Endothelial cell of umbilical vein (primary cell): ENCODE measurements at regions of chr18 and their contacts with region 1.

Region 1: DNA sequence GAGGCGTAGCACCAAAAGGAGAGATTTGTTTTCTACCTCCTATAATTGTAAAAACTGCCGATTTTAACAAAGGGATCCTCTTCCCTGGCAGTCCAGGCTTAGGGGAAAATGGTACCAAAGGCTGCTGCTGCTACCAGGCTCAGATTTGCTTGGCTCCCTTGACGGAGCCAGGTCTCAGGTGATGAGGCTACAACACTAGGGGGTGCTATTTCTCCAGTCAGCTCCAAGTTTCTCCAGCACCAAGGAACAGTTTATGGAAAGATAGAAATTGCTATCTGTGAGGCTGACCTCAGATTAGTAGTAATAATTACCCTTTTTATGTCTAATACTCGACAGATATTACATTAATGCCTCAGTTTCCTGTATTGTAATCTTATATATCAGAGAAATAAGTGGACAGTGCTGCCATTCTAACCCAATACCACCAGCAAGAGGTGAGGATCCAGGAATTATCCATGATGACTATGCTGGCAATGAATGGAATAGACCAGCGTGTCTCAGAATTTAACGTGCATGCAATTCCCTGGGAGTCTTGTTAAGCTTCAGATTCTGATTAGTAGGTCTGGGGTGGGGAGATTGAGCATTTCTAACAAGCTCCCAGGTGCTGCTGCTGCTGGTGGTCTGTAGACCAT is 111.3 kb downstream of the ESCO1 start:
- DNase-seq: peak; percentile 58
- H3K4me3 ChIP-seq: no peak overlapping the region
- H3K27ac ChIP-seq: no peak overlapping the region
- H3K4me1 ChIP-seq: peaks cover 10% of the 10 kb centered on the region
- H3K27me3 ChIP-seq: no peaks in the 10 kb centered on the region
- CTCF ChIP-seq: peak; percentile 75 to 76
- POLR2A ChIP-seq: no peak

Region 2: DNA sequence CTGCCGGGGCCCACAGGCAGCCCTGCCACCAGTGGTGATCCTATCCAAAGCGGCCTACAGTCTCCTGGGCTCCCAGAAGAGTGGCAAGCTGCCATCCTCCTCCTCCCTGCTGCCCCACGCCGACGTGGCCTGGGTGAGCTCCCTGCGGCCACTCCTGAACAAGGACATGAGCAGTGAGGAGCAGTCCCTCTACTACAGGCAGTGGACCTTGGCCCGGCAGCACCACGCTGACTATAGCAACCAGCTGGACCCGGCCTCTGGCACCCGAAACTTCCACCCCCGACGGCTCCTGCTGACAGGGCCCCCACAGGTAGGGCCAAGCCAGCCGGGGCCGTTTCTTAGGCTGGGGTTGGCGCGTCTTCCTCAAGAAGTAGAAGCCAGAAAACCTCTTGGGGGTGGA is 10.8 kb after region 1 on chr18:
- CTCF ChIA-PET with region 1: interaction called, 19 read pairs
- POLR2A ChIA-PET with region 1: no interaction called
- dilution Hi-C with region 1: no loop called
- intact Hi-C with region 1: no loop called
- DNase-seq: no peak
- H3K4me3 ChIP-seq: no peak overlapping the region
- H3K27ac ChIP-seq: no peak overlapping the region
- H3K4me1 ChIP-seq: no peaks in the 10 kb centered on the region
- H3K27me3 ChIP-seq: no peaks in the 10 kb centered on the region
- CTCF ChIP-seq: no peak
- POLR2A ChIP-seq: no peak

Region 3: GRCh38 chr18:21509062-21509461 is 19.8 kb after region 1 on chr18:
- CTCF ChIA-PET with region 1: interaction called, 20 read pairs
- POLR2A ChIA-PET with region 1: no interaction called
- dilution Hi-C with region 1: no loop called
- intact Hi-C with region 1: no loop called
- DNase-seq: no peak
- H3K4me3 ChIP-seq: no peak overlapping the region
- H3K27ac ChIP-seq: no peak overlapping the region
- H3K4me1 ChIP-seq: no peaks in the 10 kb centered on the region
- H3K27me3 ChIP-seq: no peaks in the 10 kb centered on the region
- CTCF ChIP-seq: no peak
- POLR2A ChIP-seq: no peak

Region 4: GRCh38 chr18:21600526-21601410 is 111.5 kb after region 1 on chr18 and contains the start of gene ESCO1:
- CTCF ChIA-PET with region 1: interaction called, 63 read pairs
- POLR2A ChIA-PET with region 1: no interaction called
- dilution Hi-C with region 1: no loop called
- intact Hi-C with region 1: loop called (anchors 1 kb)
- DNase-seq: peak; percentile 98
- H3K4me3 ChIP-seq: peak within 1 kb of the TSS; percentile 47 to 89 (median 68)
- H3K27ac ChIP-seq: peak within 1 kb of the TSS; percentile 59
- H3K4me1 ChIP-seq: no peaks in the 10 kb centered on the region
- H3K27me3 ChIP-seq: no peaks in the 10 kb centered on the region
- CTCF ChIP-seq: peak; percentile 97 to 99
- POLR2A ChIP-seq: peak; percentile 83
- total RNA-seq, gene ESCO1: 9.1 and 12.0 TPM in 2 replicates

Region 5: DNA sequence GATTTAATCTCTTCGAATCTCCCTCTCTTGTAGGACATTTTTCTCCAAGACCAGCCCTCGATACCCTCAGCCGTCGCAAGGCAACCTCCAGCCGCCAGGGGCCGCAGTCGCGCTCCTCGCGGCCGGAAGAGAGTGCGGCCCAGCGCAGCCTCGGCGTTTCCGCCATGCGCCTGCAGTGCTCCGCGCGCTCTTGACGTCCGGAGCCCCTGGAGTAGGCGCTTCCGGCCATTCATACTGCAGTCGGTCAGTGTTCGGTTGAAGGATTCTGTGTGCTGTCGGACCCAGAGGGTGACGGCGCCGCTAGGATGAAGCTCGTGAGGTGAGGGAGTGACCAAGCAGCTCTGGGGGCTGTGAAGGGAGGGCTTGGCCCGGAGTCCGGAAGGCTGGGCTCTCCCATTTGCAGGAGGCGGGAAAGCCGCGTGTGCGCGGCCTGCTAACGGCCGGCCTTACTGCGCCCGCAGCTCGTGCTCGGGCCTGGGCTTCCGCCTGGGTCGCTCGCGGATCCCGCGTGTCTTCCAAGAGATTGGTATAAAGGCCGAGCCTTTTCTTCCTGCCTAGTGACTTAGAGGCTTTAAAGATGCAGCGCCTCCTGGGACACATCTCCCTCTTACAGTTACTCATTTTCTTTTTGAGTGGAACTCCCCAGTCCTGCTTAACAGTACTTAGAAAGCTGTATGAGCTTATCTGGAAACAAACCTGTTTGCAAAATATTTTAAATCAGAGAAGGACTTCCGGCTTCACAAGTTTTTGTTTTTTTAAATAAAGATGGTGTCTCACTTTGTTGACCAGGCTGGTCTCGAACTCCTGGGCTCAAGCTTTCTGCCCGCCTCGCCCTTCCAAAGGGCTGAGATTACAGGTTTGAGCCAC is 123.1 kb after region 1 on chr18 and contains the start of gene SNRPD1:
- CTCF ChIA-PET with region 1: no interaction called
- POLR2A ChIA-PET with region 1: no interaction called
- dilution Hi-C with region 1: no loop called
- intact Hi-C with region 1: no loop called
- DNase-seq: peak; percentile 96
- H3K4me3 ChIP-seq: peak within 1 kb of the TSS; percentile 57 to 96 (median 86)
- H3K27ac ChIP-seq: peak within 1 kb of the TSS; percentile 90
- H3K4me1 ChIP-seq: peaks cover 20% of the 10 kb centered on the region
- H3K27me3 ChIP-seq: no peaks in the 10 kb centered on the region
- CTCF ChIP-seq: peak; percentile 97 to 98
- POLR2A ChIP-seq: peak; percentile 94
- total RNA-seq, gene SNRPD1: 91.6 and 97.3 TPM in 2 replicates

Region 6: DNA sequence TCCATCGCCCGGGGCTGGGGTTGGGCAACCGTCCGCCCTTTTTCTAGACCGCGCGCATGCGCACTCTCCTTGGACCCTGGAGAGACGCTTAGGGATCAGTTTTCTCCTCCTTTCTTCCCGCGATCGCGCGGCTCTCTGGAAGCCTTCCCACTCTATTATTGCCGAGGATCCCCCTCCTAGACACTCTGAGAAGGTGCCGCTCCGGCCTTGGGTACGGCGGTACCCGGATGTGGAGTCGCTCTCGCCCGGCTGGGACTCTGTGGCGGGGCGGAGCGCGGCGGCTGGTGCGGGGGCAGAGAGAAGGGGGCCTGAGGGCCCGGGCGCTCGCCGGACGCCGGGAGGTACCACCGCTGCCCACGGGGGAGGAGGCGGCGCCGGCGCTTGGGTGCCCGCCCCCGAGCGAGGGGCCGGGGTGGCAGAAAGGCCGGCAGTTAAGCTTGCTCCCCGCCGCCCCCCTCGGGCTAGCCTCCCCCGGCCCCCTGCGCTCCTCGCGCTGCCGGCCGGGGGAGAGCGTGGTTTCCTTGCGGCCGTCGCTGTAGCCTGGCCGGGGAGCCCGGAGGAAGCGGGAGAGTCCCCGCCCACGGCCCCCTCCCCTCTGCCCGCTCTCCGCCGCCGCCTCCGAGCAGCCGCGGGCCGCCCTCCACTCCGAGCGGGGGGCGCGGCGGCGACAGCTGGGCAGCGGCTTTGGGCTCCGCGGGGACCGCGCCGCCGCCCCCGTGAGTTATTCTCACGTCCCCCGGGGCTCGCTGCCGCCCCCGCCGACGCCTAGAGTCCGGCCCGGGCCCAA is 251.7 kb after region 1 on chr18 and contains the start of gene MIB1:
- CTCF ChIA-PET with region 1: no interaction called
- POLR2A ChIA-PET with region 1: no interaction called
- dilution Hi-C with region 1: no loop called
- intact Hi-C with region 1: loop called (anchors 1 kb)
- DNase-seq: no peak
- H3K4me3 ChIP-seq: peak within 1 kb of the TSS; percentile 78 to 99 (median 79)
- H3K27ac ChIP-seq: peak within 1 kb of the TSS; percentile 91
- H3K4me1 ChIP-seq: peaks cover 23% of the 10 kb centered on the region
- H3K27me3 ChIP-seq: no peaks in the 10 kb centered on the region
- CTCF ChIP-seq: no peak
- POLR2A ChIP-seq: peak; percentile 42
- total RNA-seq, gene MIB1: 37.5 and 40.6 TPM in 2 replicates

Region 7: GRCh38 chr18:21809725-21810124 is 320.5 kb after region 1 on chr18:
- CTCF ChIA-PET with region 1: no interaction called
- POLR2A ChIA-PET with region 1: no interaction called
- dilution Hi-C with region 1: no loop called
- intact Hi-C with region 1: no loop called
- DNase-seq: no peak
- H3K4me3 ChIP-seq: no peak overlapping the region
- H3K27ac ChIP-seq: no peak overlapping the region
- H3K4me1 ChIP-seq: no peaks in the 10 kb centered on the region
- H3K27me3 ChIP-seq: no peaks in the 10 kb centered on the region
- CTCF ChIP-seq: no peak
- POLR2A ChIP-seq: no peak